Activated CD4-positive, alpha-beta T cell treated with anti-CD3 and anti-CD28 coated beads, Interleukin-2, amount 10 ng/mL, durations not matched to agents 24 days and 14 days (primary cell): ENCODE measurements at regions of chr7 and their contacts with region 1.

Region 1: DNA sequence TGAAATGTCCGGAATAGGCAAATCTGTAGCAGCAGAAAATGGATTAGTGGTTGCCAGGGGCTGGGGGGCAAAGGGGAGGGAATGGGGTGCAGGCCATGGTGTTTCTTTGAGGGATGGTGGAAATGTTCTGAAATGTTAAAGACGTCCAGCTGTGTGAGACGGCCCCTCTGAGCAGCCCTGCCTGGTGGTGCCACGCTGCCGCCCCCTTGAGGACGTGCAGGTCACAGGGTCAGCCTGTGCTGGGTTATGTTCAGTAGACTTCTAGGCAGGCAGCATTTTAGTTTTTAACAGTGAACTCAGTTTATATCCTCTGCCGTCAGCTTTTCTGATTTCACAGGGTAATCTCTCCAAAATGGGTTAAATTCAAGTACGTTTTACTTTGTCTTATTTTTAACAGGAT is 9.4 kb downstream of the NUB1 start:
- DNase-seq: peak; percentile 78
- H3K4me3 Mint-ChIP-seq: peak overlapping the region; percentile 80
- H3K27ac Mint-ChIP-seq: peak overlapping the region; percentile 93
- H3K4me1 Mint-ChIP-seq: peaks cover 40% of the 10 kb centered on the region
- H3K27me3 Mint-ChIP-seq: no peaks in the 10 kb centered on the region

Region 2: DNA sequence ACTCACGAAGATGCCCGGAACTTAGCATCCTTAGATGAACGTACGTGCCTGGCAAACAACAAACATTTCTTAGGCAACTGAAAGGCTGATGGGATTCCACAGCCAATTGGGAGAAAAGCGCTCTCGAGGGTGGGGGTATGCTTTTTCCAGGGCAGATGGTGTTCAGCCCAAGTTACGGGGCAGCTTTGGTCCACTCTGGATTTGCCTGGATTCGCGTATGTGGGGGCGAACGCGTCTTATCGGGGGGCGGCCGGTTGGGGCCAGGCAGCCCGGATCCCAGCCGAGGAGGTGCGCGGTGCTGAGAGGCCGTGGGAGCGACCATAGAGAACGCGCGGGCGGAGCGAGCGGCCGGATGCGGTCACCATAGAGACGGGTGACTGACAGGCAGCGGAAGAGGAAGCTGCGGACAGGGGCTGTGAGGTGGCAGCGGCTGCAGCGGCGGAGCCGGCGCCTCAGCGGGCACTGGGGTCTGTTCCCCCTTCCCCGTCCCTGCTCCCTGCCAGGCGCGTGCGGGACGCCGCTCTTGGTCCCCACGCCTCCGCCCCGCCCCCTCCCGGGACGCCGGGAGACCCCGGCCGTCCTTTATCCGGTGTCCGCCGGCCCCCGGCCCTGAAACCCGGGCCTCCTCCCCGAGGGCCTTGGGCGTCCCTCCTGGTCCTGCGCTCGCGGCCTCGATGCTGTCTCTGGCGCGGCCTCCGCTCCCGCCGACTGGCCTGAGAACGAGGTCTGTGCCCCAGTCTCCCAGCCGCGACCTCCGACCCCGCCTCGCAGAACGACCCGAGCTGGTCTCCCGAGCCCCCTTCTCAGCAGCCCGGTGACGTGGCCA is 118.7 kb before region 1 on chr7 and contains the start of gene CHPF2:
- intact Hi-C with region 1: loop called (anchors 1 kb)
- DNase-seq: peak; percentile 98
- H3K4me3 Mint-ChIP-seq: peak within 1 kb of the TSS; percentile 100
- H3K27ac Mint-ChIP-seq: peak within 1 kb of the TSS; percentile 99
- H3K4me1 Mint-ChIP-seq: peaks cover 33% of the 10 kb centered on the region
- H3K27me3 Mint-ChIP-seq: peaks cover 6% of the 10 kb centered on the region
- total RNA-seq, gene CHPF2: 42.0 and 46.4 TPM in 2 replicates

Region 3: DNA sequence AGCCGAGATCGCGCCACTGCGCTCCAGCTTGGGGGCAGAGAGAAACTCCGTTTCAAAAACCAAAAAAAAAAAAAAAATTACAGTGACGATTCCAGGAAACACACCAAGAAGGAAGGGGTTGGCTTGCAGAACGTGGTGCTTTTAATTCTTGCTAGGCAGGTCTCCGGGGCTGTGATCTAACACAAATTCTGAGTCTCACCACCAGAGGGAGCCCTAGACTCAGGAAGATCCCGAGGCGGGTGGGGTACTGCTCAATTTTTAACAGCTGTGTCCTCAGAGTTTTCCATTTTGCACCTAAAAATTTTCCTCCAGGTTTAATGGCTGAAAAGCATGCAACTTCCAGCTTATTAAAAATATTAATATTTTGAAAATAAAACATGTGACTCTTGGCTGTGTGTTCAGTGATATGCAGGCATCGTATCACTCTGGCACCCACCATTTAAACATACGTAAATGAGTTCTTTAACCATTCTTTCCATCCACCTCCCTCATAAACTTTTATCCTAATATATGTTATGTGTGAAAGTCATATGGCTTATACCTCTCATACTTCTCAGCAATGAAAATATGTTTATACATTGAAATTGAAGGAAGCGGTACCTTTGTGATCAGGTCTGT is 35.9 kb before region 1 on chr7:
- intact Hi-C with region 1: loop called (anchors 1 kb)
- DNase-seq: peak; percentile 94
- H3K4me3 Mint-ChIP-seq: peak overlapping the region; percentile 31
- H3K27ac Mint-ChIP-seq: no peak overlapping the region
- H3K4me1 Mint-ChIP-seq: peaks cover 6% of the 10 kb centered on the region
- H3K27me3 Mint-ChIP-seq: no peaks in the 10 kb centered on the region